Endothelial cell of umbilical vein (primary cell): ENCODE measurements at regions of chr9 and their contacts with region 1.

Region 1: GRCh38 chr9:77977210-77977611 is 54.4 kb downstream of the GNAQ start:
- DNase-seq: peak; percentile 94
- H3K4me3 ChIP-seq: peak overlapping the region in 1 of 3 experiments; percentile 23
- H3K27ac ChIP-seq: peak overlapping the region; percentile 44
- H3K4me1 ChIP-seq: peaks cover 40% of the 10 kb centered on the region
- H3K27me3 ChIP-seq: no peaks in the 10 kb centered on the region
- CTCF ChIP-seq: peak; percentile 71 to 76
- POLR2A ChIP-seq: peak; percentile 51

Region 2: GRCh38 chr9:76302947-76303940 is 1674.0 kb before region 1 on chr9:
- CTCF ChIA-PET with region 1: no interaction called
- POLR2A ChIA-PET with region 1: no interaction called
- dilution Hi-C with region 1: no loop called
- intact Hi-C with region 1: no loop called
- DNase-seq: peak; percentile 58
- H3K4me3 ChIP-seq: no peak overlapping the region
- H3K27ac ChIP-seq: no peak overlapping the region
- H3K4me1 ChIP-seq: no peaks in the 10 kb centered on the region
- H3K27me3 ChIP-seq: peaks cover 4 to 7% of the 10 kb centered on the region in 2 experiments
- CTCF ChIP-seq: peak; percentile 20 to 27
- POLR2A ChIP-seq: no peak

Region 3: GRCh38 chr9:77433675-77434445 is 543.4 kb before region 1 on chr9:
- CTCF ChIA-PET with region 1: interaction called, 15 read pairs
- POLR2A ChIA-PET with region 1: no interaction called
- dilution Hi-C with region 1: no loop called
- intact Hi-C with region 1: no loop called
- DNase-seq: peak; percentile 68
- H3K4me3 ChIP-seq: no peak overlapping the region
- H3K27ac ChIP-seq: no peak overlapping the region
- H3K4me1 ChIP-seq: peaks cover 16% of the 10 kb centered on the region
- H3K27me3 ChIP-seq: no peaks in the 10 kb centered on the region
- CTCF ChIP-seq: peak; percentile 96
- POLR2A ChIP-seq: no peak

Region 4: GRCh38 chr9:77705636-77706035 is 271.6 kb before region 1 on chr9:
- CTCF ChIA-PET with region 1: no interaction called
- POLR2A ChIA-PET with region 1: no interaction called
- dilution Hi-C with region 1: no loop called
- intact Hi-C with region 1: no loop called
- DNase-seq: no peak
- H3K4me3 ChIP-seq: no peak overlapping the region
- H3K27ac ChIP-seq: no peak overlapping the region
- H3K4me1 ChIP-seq: peaks cover 40% of the 10 kb centered on the region
- H3K27me3 ChIP-seq: no peaks in the 10 kb centered on the region
- CTCF ChIP-seq: no peak
- POLR2A ChIP-seq: no peak

Region 5: GRCh38 chr9:77841739-77842386 is 135.3 kb before region 1 on chr9:
- CTCF ChIA-PET with region 1: interaction called, 48 read pairs
- POLR2A ChIA-PET with region 1: no interaction called
- dilution Hi-C with region 1: no loop called
- intact Hi-C with region 1: loop called (anchors 1 kb)
- DNase-seq: peak; percentile 38
- H3K4me3 ChIP-seq: no peak overlapping the region
- H3K27ac ChIP-seq: no peak overlapping the region
- H3K4me1 ChIP-seq: peaks cover 73% of the 10 kb centered on the region
- H3K27me3 ChIP-seq: no peaks in the 10 kb centered on the region
- CTCF ChIP-seq: peak; percentile 12 to 26
- POLR2A ChIP-seq: no peak

Region 6: GRCh38 chr9:77865385-77866047 is 111.7 kb before region 1 on chr9:
- CTCF ChIA-PET with region 1: no interaction called
- POLR2A ChIA-PET with region 1: no interaction called
- dilution Hi-C with region 1: no loop called
- intact Hi-C with region 1: no loop called
- DNase-seq: no peak
- H3K4me3 ChIP-seq: no peak overlapping the region
- H3K27ac ChIP-seq: no peak overlapping the region
- H3K4me1 ChIP-seq: no peaks in the 10 kb centered on the region
- H3K27me3 ChIP-seq: no peaks in the 10 kb centered on the region
- CTCF ChIP-seq: no peak
- POLR2A ChIP-seq: no peak

Region 7: DNA sequence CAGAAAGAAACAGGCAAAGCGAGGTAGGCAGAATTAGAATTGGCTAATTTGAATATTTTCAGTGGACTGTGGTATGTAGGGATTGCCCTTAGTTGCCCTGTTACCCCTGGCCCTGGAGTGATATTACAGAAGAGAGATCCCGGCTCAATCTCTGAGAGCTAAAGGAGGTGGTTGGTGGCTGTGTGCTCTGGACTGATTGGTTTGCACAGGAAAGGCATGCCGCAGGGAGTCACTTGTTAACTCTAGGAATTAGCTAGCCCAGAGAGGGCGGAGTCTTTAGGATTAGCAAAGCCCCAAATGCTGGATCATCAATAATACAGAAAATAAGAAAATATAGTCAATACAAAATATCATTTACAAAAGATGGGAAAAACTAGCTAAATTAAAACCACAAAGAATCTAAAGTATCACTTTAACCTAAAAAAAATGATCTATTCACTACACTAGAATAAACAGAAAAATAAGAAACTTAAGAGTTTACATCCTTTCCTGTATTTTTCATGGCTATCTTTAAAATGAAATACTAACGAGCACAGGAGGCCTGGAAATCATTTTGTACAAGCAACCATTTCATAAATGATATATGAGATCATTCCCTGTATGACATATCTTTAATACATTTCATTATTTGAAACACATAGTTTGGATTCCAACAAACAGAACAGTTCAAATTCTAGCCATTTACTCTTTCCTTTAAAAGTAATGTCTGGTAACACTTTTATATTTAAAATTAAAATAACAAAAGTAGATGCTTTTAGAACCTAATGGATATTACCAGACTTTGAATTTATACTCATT is 16.7 kb before region 1 on chr9:
- CTCF ChIA-PET with region 1: interaction called, 13 read pairs
- POLR2A ChIA-PET with region 1: interaction called, 3 read pairs
- dilution Hi-C with region 1: no loop called
- intact Hi-C with region 1: no loop called
- DNase-seq: no peak
- H3K4me3 ChIP-seq: no peak overlapping the region
- H3K27ac ChIP-seq: no peak overlapping the region
- H3K4me1 ChIP-seq: peaks cover 38% of the 10 kb centered on the region
- H3K27me3 ChIP-seq: no peaks in the 10 kb centered on the region
- CTCF ChIP-seq: no peak
- POLR2A ChIP-seq: no peak

Region 8: DNA sequence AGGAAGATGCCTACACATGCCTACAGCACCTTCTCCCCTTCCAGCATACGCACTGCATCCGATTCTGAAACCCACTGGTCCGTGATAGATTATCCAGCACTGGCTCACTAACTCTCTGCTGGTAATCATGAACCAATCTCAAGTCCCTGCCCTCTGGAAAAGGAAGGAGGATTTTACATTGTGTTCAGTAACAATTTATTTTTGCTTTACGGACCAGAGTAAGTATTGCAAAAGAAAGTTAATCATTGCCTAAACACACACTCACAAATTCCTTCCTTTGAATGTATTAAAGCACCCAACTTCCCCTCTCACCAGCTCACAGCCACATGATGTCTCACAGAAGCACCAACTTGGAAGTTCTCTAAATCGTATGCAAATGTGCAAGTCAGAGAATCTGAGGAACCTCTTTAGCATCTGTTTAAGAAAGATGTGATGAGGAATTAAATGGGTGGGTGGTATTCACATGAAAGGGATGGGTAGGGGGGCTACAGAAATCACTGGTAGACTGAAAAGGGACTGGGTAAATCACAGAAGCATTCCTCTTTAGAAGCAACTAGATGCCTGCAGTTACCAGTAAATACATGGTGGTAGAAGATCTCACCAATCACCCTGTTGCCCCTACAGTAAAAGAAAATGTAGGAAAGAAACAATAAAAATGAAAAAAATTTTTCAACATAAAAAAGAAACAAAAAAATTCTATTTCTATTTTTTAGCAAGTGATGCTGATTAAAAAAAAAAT is 46.0 kb after region 1 on chr9:
- CTCF ChIA-PET with region 1: interaction called, 81 read pairs
- POLR2A ChIA-PET with region 1: interaction called, 4 read pairs
- dilution Hi-C with region 1: no loop called
- intact Hi-C with region 1: no loop called
- DNase-seq: peak; percentile 64
- H3K4me3 ChIP-seq: peak overlapping the region in 1 of 3 experiments; percentile 13
- H3K27ac ChIP-seq: peak overlapping the region; percentile 36
- H3K4me1 ChIP-seq: peaks cover 58% of the 10 kb centered on the region
- H3K27me3 ChIP-seq: no peaks in the 10 kb centered on the region
- CTCF ChIP-seq: no peak
- POLR2A ChIP-seq: no peak

Region 9: GRCh38 chr9:78207319-78207718 is 230.1 kb after region 1 on chr9:
- CTCF ChIA-PET with region 1: interaction called, 13 read pairs
- POLR2A ChIA-PET with region 1: no interaction called
- dilution Hi-C with region 1: no loop called
- intact Hi-C with region 1: no loop called
- DNase-seq: peak; percentile 86
- H3K4me3 ChIP-seq: no peak overlapping the region
- H3K27ac ChIP-seq: peak overlapping the region; percentile 87
- H3K4me1 ChIP-seq: peaks cover 9% of the 10 kb centered on the region
- H3K27me3 ChIP-seq: no peaks in the 10 kb centered on the region
- CTCF ChIP-seq: no peak
- POLR2A ChIP-seq: peak; percentile 39

Region 10: GRCh38 chr9:78676623-78677022 is 699.4 kb after region 1 on chr9:
- CTCF ChIA-PET with region 1: no interaction called
- POLR2A ChIA-PET with region 1: no interaction called
- dilution Hi-C with region 1: no loop called
- intact Hi-C with region 1: no loop called
- DNase-seq: no peak
- H3K4me3 ChIP-seq: no peak overlapping the region
- H3K27ac ChIP-seq: no peak overlapping the region
- H3K4me1 ChIP-seq: no peaks in the 10 kb centered on the region
- H3K27me3 ChIP-seq: no peaks in the 10 kb centered on the region
- CTCF ChIP-seq: no peak
- POLR2A ChIP-seq: no peak